ENCODE measurements at regions of chr19 and their contacts with region 1.

Region 1: GRCh38 chr19:2151339-2152229 is at the start of gene AP3D1:
- DNase-seq: peak; percentile 100
- H3K4me3 ChIP-seq: peak within 1 kb of the TSS; percentile 74
- H3K4me3 Mint-ChIP-seq: peak within 1 kb of the TSS; percentile 76 to 96 (median 89)
- H3K27ac ChIP-seq: peak within 1 kb of the TSS; percentile 86
- H3K27ac Mint-ChIP-seq: peak within 1 kb of the TSS; percentile 81 to 97 (median 96)
- H3K4me1 ChIP-seq: peaks cover 30% of the 10 kb centered on the region
- H3K4me1 Mint-ChIP-seq: peaks cover 32 to 39% (median 38%) of the 10 kb centered on the region in 3 donors
- H3K27me3 ChIP-seq: no peaks in the 10 kb centered on the region
- H3K27me3 Mint-ChIP-seq: peaks cover 0 to 3% of the 10 kb centered on the region in 2 donors
- total RNA-seq, gene AP3D1: 96.5 to 99.2 TPM

Region 2: DNA sequence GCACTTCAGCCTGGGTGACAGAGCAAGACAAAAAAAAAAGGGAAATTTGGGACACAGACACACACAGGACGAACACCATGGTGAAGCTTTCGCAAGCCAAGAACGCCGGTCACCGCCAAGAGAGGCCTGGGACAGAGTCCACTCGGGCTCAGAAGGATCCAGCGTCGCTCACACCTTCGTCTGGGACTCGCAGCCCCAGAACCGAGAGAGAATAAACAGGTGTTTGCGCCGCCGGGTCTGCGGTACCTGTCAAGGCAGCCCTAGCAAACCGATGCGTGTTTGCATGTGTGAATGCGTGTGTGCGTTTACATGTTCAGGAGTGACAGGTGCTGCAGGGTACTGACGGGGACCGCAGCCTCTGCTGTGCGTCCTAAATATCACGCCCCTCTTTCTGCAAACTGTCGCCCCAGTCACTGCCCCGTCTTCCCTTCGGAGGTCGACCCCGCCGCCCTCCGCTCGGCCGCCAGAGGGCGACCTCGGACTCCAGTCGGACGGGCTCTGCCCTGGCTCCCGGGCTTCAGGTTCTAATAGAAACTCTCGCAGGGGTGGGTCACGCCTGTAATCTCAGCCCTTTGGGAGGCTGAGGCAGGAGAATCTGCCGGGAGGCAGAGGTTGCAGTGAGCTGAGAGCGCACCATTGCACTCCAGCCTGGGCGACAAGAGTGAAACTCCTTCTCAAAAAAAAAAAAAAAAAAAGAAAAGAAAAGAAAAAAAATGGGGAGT is 222.4 kb before region 1 on chr19:
- CTCF ChIA-PET with region 1: no interaction called
- POLR2A ChIA-PET with region 1: no interaction called
- DNase-seq: peak; percentile 74 to 85 (median 75)
- H3K4me3 ChIP-seq: peak overlapping the region; percentile 45
- H3K4me3 Mint-ChIP-seq: peak overlapping the region; percentile 66 to 93 (median 74)
- H3K27ac ChIP-seq: no peak overlapping the region
- H3K27ac Mint-ChIP-seq: peak overlapping the region in 4 of 8 donors; percentile 52 to 98 (median 87)
- H3K4me1 ChIP-seq: peaks cover 20% of the 10 kb centered on the region
- H3K4me1 Mint-ChIP-seq: peaks cover 15 to 28% (median 18%) of the 10 kb centered on the region in 3 donors
- H3K27me3 ChIP-seq: no peaks in the 10 kb centered on the region
- H3K27me3 Mint-ChIP-seq: peaks cover 0 to 4% of the 10 kb centered on the region in 2 donors

Region 3: DNA sequence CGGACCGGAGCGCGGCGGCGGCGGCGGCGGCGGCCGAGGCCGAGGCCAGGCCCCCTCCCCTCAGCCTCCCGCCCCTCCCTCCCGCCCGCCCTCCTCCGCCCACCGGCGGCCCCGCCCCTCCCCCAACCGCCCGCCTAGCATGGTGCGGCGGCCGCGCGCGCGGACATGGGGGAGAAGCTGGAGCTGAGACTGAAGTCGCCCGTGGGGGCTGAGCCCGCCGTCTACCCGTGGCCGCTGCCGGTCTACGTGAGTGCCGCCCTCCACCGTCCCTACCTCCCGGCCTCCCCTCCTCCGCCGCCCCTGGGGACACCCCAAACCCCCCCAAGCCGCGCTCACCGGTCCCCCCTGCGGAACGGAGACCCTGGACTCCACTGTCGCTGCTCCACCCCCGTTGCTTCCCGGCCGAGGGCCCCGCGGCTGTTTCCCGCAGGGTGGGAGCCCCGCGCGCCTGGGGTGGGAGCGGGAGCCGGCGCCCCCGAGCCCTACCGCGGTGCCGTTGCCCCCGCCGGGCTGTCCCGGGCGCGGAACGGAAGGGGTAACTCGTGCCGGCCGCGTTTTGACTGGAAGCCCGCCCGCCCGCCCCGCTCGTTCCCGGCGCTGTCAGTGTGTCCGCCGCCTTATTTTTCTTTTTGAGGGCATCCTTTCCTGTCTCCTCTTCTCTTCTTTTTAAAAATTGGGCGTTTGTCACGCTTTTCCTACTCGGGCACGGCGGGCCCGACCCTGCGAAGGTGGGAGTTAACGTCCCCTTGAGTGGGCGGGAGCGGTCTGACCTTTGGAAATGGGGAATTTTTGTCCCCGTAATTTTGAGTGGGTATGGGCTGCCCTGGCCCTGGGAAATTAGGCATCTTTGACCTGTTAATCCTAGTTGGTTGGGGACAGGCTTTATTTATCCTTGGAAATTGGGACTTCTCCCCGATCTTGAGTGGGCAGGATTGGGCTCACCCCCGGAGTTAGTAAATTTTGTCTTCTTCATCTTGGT is 12.7 kb after region 1 on chr19:
- CTCF ChIA-PET with region 1: interaction called, 8 read pairs
- POLR2A ChIA-PET with region 1: interaction called, 10 read pairs
- DNase-seq: no peak
- H3K4me3 ChIP-seq: peak overlapping the region; percentile 51
- H3K4me3 Mint-ChIP-seq: peak overlapping the region; percentile 85 to 98 (median 90)
- H3K27ac ChIP-seq: peak overlapping the region; percentile 73
- H3K27ac Mint-ChIP-seq: peak overlapping the region; percentile 29 to 94 (median 90)
- H3K4me1 ChIP-seq: peaks cover 23% of the 10 kb centered on the region
- H3K4me1 Mint-ChIP-seq: peaks cover 29 to 35% (median 30%) of the 10 kb centered on the region in 3 donors
- H3K27me3 ChIP-seq: no peaks in the 10 kb centered on the region
- H3K27me3 Mint-ChIP-seq: no peaks in the 10 kb centered on the region

Region 4: DNA sequence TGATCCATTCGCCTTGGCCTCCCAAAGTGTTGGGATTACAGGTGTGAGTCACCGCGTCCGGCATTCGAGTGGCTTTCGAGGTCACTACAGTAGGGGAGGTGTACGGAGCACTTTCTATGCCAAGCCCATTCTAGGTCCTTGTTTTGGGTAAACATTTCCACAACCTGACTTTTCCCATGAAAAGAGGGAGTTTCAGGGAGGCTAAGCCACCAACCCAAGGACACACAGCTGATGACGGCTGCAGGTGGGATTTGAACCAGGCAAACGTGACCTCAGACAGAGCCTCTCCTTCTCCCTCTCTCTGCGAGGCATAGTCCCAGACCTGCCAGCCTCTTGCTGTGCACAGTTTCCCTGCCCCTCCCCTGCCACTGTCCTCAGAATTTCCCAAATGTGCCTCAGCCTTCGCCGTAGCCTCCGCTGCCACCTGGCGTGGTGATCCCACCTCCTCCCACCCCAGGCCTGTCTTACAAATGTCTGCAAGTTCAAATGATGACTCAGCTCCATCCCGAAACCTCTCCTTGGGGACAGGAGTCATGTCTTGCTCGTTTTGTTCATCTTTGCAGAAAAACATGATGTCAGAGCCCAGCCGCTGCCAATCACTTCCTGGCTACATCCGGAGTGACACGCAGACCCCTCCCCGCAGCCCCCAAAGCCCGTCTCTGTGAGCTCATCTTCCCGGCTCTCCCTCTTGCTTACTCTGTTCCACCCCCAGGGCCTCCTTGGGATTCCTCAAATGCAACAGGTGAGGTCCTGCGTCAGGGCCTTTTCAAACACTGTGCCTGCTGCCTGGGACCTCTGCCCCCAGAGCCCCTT is 317.7 kb after region 1 on chr19:
- CTCF ChIA-PET with region 1: no interaction called
- POLR2A ChIA-PET with region 1: interaction called, 10 read pairs
- DNase-seq: peak in 1 of 5 donors; percentile 13
- H3K4me3 ChIP-seq: no peak overlapping the region
- H3K4me3 Mint-ChIP-seq: no peak overlapping the region
- H3K27ac ChIP-seq: no peak overlapping the region
- H3K27ac Mint-ChIP-seq: no peak overlapping the region
- H3K4me1 ChIP-seq: no peaks in the 10 kb centered on the region
- H3K4me1 Mint-ChIP-seq: peaks cover 0 to 5% (median 1%) of the 10 kb centered on the region in 3 donors
- H3K27me3 ChIP-seq: no peaks in the 10 kb centered on the region
- H3K27me3 Mint-ChIP-seq: peaks cover 0 to 4% of the 10 kb centered on the region in 2 donors